ENCODE measurements at regions of chr17 and their contacts with region 1.

Region 1: GRCh38 chr17:63579540-63580001 is 21.1 kb upstream of the TACO1 start:
- DNase-seq: no peak
- H3K4me3 ChIP-seq: no peak overlapping the region
- H3K27ac ChIP-seq: no peak overlapping the region
- H3K4me1 ChIP-seq: no peaks in the 10 kb centered on the region
- H3K27me3 ChIP-seq: no peaks in the 10 kb centered on the region
- CTCF ChIP-seq: no peak

Region 2: DNA sequence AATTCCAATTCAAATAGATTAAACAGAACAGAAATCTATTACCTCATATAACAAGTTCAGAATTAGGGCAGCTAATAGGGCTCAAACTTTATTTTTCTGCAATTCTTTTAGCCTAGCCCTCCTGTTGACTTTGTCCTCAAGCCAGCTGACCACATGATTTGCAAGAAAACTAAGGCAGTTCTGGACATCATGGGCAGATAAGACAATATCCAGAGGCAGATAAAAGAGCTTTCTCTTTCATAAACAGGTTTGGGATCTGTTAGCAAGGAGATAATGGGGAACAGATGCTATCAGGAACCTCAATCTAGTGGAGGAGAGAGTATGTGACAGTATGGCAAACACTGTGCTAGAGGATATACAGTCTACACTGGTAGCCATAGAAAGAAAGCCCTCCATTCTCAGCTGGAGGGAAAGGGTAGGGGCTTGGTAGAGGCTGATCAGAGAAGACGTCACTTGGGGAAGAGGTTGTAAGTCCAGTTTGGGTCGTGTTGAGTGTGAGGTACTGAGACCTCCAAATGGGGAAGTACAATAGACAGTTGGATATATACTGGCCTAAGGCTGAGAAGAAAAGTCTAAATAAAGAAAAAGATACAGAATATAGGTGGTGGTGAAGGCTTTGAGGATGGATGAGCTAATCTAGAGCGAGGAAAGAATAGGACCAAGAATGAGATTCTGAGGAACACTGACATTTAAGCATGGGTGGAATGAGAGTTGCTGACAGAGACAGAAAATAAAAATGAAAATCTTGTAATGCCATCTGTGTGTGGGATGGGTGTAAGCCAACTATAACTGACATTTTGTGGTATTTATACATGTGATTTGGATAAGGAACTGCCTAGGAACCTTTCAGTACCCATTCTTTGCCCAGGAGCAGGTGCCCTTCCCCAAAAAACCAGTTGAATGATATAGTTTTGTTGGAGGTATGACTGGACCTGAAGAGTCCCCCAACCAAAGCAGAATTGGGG is 200.9 kb before region 1 on chr17:
- CTCF ChIA-PET with region 1: interaction called, 12 read pairs
- POLR2A ChIA-PET with region 1: no interaction called
- intact Hi-C with region 1: no loop called
- DNase-seq: no peak
- H3K4me3 ChIP-seq: no peak overlapping the region
- H3K27ac ChIP-seq: no peak overlapping the region
- H3K4me1 ChIP-seq: no peaks in the 10 kb centered on the region
- H3K27me3 ChIP-seq: no peaks in the 10 kb centered on the region
- CTCF ChIP-seq: no peak

Region 3: GRCh38 chr17:64117981-64118979 is 538.7 kb after region 1 on chr17:
- CTCF ChIA-PET with region 1: no interaction called
- POLR2A ChIA-PET with region 1: no interaction called
- intact Hi-C with region 1: no loop called
- DNase-seq: peak; percentile 66
- H3K4me3 ChIP-seq: no peak overlapping the region
- H3K27ac ChIP-seq: peak overlapping the region; percentile 3
- H3K4me1 ChIP-seq: peaks cover 32% of the 10 kb centered on the region
- H3K27me3 ChIP-seq: no peaks in the 10 kb centered on the region
- CTCF ChIP-seq: no peak

Measured in A673 (cell line).